GM18951 (cell line): ENCODE measurements at regions of chrX and their contacts with region 1.

Region 1: DNA sequence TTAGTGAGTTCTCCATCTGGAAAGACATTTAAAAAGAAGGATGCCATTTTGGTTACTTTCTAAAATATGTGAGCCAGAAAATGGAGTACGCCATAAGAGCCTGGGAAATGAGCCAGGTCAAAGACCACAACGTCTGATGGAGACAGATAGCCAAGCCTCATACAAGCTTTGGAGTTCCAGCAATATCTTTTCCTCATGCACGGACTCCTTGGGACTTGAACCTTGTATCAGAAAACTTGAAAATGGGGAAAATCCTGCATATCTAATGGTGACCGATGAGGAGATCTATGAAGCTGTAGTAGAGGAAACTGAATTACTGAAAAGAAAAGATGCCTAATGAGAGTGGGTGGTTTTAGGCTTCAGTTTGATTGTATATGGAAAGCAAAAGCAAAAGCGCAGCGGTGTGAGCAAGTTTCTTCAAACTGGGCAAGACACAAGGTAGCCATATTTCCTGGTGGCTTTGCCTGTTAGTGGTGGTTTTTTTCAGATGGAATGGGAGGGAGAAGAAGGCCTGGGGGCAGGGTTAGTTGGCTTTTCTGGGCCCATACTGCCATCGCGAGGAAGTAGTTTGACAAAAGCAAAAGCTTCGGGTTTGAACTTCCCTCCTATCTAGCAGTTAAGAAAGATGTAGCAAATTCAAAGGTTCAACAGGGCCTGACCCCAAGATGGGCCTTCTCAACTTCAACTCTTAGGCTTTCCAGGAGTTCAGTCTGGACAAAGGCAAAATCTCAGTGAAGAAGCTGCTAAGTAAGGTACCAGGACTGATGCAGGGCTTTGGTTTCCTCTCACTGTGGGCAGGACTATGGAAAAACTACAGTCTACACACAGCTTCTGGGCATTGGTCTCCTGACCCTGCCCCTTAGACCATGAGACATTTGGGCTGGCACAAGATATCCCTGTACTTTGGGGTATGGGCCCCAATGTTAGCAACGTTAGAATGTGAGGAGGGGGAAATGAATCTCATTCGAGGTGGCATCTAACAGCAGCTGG is 210.0 kb upstream of the STK26 start:
- POLR2A ChIP-seq: peak; percentile 20

Region 2: DNA sequence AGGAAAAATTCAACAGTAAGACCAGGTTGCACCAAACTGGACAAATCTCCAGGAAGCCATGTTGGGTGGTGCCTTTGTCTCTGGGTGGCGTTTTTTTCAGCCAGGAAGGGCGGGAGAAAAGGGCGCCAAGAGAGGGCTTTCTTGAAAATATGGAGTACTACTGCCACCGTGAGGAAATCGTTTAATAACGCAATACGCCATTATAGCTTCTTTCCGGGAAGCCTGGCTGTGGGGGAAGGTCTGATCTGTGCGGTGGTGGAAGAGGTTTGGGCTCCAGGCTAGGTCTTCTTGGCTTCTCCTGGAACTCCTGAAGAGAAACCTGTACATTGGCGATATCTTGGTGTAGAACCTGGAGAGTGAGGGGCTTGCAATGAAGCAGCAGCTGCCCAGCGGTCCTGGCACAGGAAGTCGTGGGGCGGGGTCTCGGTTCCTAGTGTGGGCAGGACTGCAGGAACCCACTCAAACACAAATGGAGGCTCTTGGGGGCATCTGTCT is 66.6 kb before region 1 on chrX:
- in situ Hi-C with region 1: loop called (anchors 10 kb)
- POLR2A ChIP-seq: no peak